Ascending aorta (tissue), 2 donors: ENCODE measurements at regions of chr2 and their contacts with region 1.

Region 1: GRCh38 chr2:216108967-216109921 is at the start of gene XRCC5:
- DNase-seq: peak; percentile 68 to 97
- H3K4me3 ChIP-seq: peak within 1 kb of the TSS; percentile 54 to 88
- H3K27ac ChIP-seq: peak within 1 kb of the TSS; percentile 90 to 92
- H3K4me1 ChIP-seq: peaks cover 3 to 13% of the 10 kb centered on the region in 2 donors
- H3K27me3 ChIP-seq: no peaks in the 10 kb centered on the region
- CTCF ChIP-seq: no peak
- total RNA-seq, gene XRCC5: 45.4 TPM

Region 2: GRCh38 chr2:216081487-216082116 is 27.6 kb before region 1 on chr2 and contains the starts of genes PECR and TMEM169:
- intact Hi-C with region 1: loop called (anchors 2 kb)
- DNase-seq: peak; percentile 36 to 81
- H3K4me3 ChIP-seq: peak within 1 kb of the TSS; percentile 52 to 69
- H3K27ac ChIP-seq: no peak within 1 kb of the TSS
- H3K4me1 ChIP-seq: peaks cover 0 to 9% of the 10 kb centered on the region in 2 donors
- H3K27me3 ChIP-seq: no peaks in the 10 kb centered on the region
- CTCF ChIP-seq: no peak
- total RNA-seq, gene PECR: 32.2 TPM
- total RNA-seq, gene TMEM169: 7.3 TPM

Region 3: DNA sequence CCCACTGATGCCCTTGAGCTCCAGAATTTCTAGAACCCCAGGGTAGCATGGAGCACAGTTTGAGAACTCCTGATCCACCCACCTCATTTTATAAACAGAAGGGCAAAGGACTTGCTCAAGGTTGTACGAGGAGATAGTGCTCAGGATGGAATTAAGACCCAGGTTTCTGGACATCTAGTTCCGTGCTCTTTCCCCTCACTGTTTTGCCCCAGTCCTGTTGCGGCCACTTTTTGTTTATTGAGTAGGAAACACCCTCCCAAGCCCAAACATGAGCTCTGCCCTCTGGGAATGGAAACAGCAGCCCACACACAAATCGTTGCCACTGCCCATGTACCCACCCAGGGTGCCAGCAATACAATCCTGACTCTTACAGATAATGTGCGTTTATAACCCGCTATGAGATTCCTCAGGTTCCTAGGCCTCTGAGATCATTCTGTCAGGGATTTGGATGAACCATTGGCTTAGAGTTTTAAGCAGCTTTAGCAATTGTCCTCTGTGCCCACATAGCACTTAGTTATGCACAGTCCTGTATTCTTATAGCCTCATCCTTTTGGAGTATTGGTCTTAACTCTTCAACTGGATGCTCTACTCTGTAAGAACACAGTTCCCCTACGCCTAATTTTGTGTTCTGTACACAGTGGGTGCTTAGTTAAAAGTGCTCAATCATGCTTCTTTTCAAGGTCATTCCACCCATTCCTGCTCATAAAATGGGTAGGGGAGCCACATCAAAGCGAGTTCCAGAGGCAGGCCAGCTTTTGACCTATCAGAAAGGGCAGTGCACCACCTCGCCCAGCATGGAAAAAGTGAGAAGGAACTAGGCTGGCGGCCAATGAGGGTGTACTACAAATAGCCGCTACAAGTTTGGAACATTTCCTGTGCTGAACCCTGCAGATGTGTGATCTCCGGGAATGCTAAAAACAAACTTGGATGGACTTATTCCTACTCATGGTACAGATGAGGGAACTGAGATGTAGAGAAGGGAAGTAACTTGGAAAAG is 463.6 kb after region 1 on chr2:
- intact Hi-C with region 1: no loop called
- DNase-seq: peak; percentile 71 to 98
- H3K4me3 ChIP-seq: no peak overlapping the region
- H3K27ac ChIP-seq: peak overlapping the region; percentile 91 to 94
- H3K4me1 ChIP-seq: peaks cover 4 to 27% of the 10 kb centered on the region in 2 donors
- H3K27me3 ChIP-seq: no peaks in the 10 kb centered on the region
- CTCF ChIP-seq: no peak

Region 4: DNA sequence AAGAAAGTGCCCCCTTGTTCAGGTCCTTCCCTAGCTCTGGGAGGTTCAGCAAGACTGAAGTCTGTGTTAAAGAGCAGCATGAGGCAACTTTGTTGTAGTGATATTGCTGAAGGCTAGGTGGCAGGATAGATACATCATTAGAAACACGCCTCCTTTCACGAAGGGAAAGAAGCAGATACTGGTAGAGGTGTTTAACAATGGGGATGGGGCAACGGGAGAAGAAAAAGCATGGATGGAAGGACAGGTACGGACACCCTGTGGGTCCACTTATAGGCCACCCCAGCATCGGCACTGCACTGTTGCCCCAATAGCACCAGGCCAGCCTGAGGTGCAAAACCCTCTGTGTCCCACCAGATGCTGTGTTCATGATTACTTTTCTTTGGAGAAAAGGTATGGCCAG is 589.7 kb after region 1 on chr2:
- intact Hi-C with region 1: no loop called
- DNase-seq: no peak
- H3K4me3 ChIP-seq: no peak overlapping the region
- H3K27ac ChIP-seq: peak overlapping the region; percentile 65 to 93
- H3K4me1 ChIP-seq: peaks cover 3 to 37% of the 10 kb centered on the region in 2 donors
- H3K27me3 ChIP-seq: no peaks in the 10 kb centered on the region
- CTCF ChIP-seq: peak; percentile 60 to 75 (median 70)